Mammary epithelial cell (primary cell): ENCODE measurements at regions of chr12 and their contacts with region 1.

Region 1: DNA sequence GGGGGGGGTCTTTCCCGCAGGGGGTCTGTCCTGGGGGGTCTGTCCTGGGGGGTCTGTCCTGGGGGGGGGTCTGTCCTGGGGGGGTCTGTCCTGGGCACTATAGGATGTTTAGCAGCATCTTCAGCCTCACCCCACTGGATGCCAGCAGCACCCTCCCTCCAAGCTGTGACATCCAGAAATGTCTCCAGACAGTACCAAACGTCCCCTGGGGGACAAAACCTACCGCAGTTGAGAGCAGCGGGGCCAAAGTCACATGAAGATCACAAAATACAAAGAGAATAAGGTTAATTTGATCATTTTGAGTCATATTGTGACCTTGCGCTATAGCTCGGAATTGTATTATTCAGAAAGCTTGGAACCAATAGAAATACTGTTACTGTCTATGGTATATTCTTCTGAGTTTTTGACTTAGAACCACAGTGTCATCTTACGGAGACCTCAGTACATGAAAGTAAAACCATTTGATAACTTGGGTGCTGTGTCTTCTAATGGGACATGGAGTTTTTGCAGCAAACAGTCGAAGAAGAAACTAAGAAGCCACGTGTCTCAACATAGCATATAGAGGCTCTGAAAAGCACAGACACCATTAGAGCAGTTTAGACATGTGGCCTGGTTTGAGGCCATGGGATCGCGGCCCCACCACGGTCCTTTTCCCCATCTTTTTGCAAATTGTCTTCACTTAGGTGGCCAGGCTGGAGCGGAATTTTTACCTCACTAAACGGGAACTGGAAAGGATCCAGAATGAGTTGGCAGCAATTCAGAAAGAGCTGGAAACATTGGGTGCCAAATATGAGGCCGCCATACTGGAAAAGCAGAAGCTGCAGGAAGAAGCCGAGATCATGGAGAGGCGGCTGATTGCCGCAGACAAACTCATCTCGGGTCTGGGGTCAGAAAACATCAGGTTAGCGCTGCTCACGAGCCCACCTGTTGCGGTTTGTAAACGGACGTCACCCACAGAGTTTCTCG is 59.9 kb downstream of the CCDC92 start:
- DNase-seq: no peak
- H3K4me3 ChIP-seq: no peak overlapping the region
- H3K27ac ChIP-seq: no peak overlapping the region
- H3K4me1 ChIP-seq: peaks cover 7% of the 10 kb centered on the region
- H3K27me3 ChIP-seq: no peaks in the 10 kb centered on the region
- CTCF ChIP-seq: no peak

Region 2: GRCh38 chr12:123860377-123860776 is 52.3 kb before region 1 on chr12:
- CTCF ChIA-PET with region 1: no interaction called
- dilution Hi-C with region 1: loop called (anchors 5 kb)
- in situ Hi-C with region 1: no loop called
- intact Hi-C with region 1: no loop called
- DNase-seq: no peak
- H3K4me3 ChIP-seq: no peak overlapping the region
- H3K27ac ChIP-seq: no peak overlapping the region
- H3K4me1 ChIP-seq: no peaks in the 10 kb centered on the region
- H3K27me3 ChIP-seq: peaks cover 2% of the 10 kb centered on the region
- CTCF ChIP-seq: peak in 1 of 2 donors; percentile 8